Spleen (tissue), 13 donors: ENCODE measurements at regions of chr11 and their contacts with region 1.

Region 1: GRCh38 chr11:11798586-11799438 is 43.0 kb upstream of the USP47 start:
- DNase-seq: peak; percentile 92
- H3K4me3 ChIP-seq: no peak overlapping the region
- H3K27ac ChIP-seq: no peak overlapping the region
- H3K4me1 ChIP-seq: peaks cover 0 to 2% (median 0%) of the 10 kb centered on the region in 6 donors
- H3K27me3 ChIP-seq: peaks cover 0 to 32% (median 3%) of the 10 kb centered on the region in 7 donors
- CTCF ChIP-seq: peak; percentile 33 to 92 (median 77)
- POLR2A ChIP-seq: no peak

Region 2: DNA sequence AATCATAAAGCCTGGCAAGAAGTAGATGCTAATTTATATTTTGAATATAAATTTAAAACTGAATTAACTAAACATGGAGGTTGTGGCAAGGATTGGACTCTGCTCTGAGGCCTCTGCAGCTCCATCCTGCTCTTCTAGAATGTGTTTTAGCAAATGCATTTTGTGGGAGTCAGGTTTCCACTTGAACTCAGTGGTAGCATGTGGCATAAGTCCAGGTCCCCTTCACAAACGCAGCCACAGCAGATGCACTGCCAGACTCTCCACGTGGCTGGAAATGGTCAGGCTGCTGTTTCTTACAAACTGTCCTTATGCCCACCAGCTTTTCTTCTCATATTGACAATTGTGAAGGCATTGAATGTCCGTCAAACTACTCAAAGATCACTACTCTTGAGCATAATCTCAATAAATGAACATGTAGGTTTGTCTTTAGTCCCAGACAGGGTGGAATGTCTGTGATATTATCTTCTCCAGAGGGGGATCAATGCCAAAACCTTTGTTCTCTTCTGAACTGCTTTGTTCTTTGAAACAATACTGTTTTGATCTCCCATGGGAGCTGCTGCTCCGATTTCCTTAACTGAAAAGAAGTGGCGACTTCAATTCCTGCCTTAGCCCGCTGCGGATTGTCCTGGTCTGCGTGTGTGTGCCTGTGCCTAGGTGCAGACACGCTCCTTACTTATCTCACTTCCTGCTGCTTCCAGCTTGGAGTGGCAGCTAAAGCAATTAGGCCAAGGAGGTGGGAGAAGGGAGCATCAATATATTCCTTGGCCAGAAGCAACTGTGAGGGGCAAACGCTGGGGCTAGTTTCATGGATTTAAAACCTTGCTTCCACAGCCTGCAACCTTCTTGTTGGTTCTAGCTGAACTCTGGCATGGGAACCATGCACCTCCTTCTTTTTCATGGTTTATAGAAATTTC is 1014.3 kb before region 1 on chr11:
- intact Hi-C with region 1: loop called (anchors 10 kb)
- DNase-seq: no peak
- H3K4me3 ChIP-seq: no peak overlapping the region
- H3K27ac ChIP-seq: no peak overlapping the region
- H3K4me1 ChIP-seq: no peaks in the 10 kb centered on the region
- H3K27me3 ChIP-seq: no peaks in the 10 kb centered on the region
- CTCF ChIP-seq: no peak
- POLR2A ChIP-seq: no peak

Region 3: GRCh38 chr11:11545285-11546275 is 253.2 kb before region 1 on chr11:
- intact Hi-C with region 1: no loop called
- DNase-seq: no peak
- H3K4me3 ChIP-seq: no peak overlapping the region
- H3K27ac ChIP-seq: no peak overlapping the region
- H3K4me1 ChIP-seq: peaks cover 0 to 7% (median 2%) of the 10 kb centered on the region in 6 donors
- H3K27me3 ChIP-seq: no peaks in the 10 kb centered on the region
- CTCF ChIP-seq: no peak
- POLR2A ChIP-seq: no peak

Region 4: DNA sequence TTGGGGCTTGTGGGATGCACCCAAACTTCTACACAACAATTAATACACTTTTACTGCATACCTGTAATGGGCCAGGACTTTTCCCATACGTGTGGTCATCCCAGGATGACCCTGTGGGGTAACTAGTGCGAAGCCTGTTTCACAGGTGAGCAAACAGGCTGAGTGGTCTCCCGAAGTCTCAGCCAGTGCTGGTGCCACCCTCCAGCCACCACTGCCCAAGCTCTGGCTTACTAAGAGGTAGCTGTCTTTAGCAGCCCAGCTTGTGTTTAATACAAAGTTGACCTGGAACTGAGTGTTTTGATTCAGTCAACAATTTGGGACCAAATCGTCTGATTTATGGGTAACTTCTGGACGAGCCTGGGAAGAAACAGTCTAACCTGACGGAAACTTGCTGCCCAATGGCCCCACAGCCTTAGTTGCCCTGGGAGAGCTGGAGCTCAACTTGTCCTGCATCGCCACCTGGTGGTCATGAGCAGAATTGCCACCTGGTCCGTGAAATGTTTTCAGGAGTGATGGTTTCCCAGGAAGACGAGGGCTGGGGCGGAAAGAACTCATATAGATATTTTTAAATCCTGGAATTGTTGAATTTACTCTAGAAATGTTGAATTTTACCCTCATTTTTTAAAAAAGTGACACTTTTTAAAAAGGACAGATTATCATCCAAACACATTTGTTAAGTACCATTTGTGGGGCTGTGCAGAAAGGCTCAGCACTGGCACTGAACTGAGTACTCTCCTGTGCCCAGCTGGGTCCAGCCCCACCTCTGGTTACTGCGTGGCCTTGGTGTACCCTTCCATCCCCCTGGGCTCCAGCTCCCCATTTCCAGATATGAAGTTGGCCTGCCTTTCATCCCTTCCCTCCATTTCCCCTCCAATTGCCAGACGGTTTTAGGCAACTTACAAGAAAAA is 483.0 kb after region 1 on chr11:
- intact Hi-C with region 1: loop called (anchors 10 kb)
- DNase-seq: peak; percentile 89
- H3K4me3 ChIP-seq: no peak overlapping the region
- H3K27ac ChIP-seq: no peak overlapping the region
- H3K4me1 ChIP-seq: peaks cover 0 to 21% (median 8%) of the 10 kb centered on the region in 6 donors
- H3K27me3 ChIP-seq: peaks cover 0 to 10% (median 0%) of the 10 kb centered on the region in 7 donors
- CTCF ChIP-seq: peak; percentile 87 to 97 (median 92)
- POLR2A ChIP-seq: no peak